PC-9 (cell line): ENCODE measurements at regions of chr19 and their contacts with region 1.

Region 1: GRCh38 chr19:54137086-54137921 is at the start of gene CNOT3:
- DNase-seq: peak; percentile 100
- H3K4me3 ChIP-seq: peak within 1 kb of the TSS; percentile 83
- H3K27ac ChIP-seq: peak within 1 kb of the TSS; percentile 82
- H3K4me1 ChIP-seq: peaks cover 26% of the 10 kb centered on the region; the same call in 1 of the 2 replicates
- H3K27me3 ChIP-seq: no peaks in the 10 kb centered on the region
- CTCF ChIP-seq: no peak
- total RNA-seq, gene CNOT3: 83.0 and 89.1 TPM in 2 replicates

Region 2: DNA sequence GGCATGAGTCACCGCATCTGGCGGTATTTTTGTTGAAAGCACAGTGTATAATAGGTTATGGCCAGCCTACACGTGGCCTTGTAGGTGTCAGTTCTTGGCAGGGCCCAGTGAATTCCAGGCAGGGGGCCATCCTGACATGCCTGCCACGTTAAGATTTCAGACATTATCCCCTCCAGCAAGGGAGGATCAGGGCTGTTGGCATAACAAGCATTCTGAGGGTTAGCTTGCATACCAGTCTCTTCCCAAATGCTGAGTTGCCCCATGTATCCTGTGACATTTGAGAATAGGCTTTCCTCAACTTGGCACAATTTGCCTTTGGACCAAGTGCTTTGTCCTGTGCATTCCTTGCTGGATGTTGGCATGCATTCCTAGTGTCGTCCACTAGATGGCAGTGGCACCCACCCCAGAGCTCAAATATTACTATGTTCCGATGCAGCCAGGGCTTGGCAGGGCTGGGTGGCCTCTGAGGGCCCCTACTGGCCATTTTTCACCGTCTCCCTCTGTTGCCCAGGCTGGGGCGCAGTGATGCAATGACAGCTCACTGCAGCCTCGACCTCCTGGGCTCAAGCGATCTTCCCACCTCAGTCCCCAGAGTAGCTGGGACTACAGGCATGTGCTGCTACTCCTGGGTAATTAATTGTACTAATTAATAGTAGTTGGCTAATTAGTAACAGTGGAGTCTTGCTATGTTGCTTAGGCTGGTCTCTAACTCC is 344.4 kb before region 1 on chr19:
- CTCF ChIA-PET with region 1: interaction called, 15 read pairs
- POLR2A ChIA-PET with region 1: no interaction called
- intact Hi-C with region 1: no loop called
- DNase-seq: peak; percentile 90 to 95
- H3K4me3 ChIP-seq: no peak overlapping the region
- H3K27ac ChIP-seq: no peak overlapping the region
- H3K4me1 ChIP-seq: no peaks in the 10 kb centered on the region
- H3K27me3 ChIP-seq: no peaks in the 10 kb centered on the region
- CTCF ChIP-seq: peak; percentile 99

Region 3: DNA sequence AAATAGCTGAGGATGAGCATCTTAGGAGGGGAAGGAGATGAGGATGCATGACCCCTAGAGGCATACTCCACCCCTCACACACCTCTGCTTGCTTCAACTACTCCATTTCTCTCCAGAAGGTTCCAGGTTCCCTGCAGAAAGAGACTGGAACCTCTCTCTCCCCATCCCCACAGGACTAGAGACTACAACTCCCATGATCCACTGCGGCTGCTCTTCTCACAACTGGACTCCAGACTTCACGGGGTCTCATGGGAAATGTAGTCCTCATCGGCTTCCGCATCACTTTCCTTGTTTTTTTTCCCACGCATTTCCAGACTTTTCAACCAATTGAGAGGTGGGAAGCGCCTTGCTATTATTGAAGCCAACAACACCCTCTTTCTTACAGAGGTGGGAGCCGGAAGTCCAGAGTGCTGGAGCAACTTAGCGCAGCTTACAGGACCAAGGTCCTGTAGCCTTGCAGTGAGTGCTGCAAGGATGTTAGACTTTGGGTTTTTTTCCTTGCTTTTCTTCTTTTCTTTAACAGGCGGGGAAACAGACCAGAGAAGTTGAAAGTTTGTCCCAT is 159.8 kb before region 1 on chr19:
- CTCF ChIA-PET with region 1: no interaction called
- POLR2A ChIA-PET with region 1: interaction called, 9 read pairs
- intact Hi-C with region 1: loop called (anchors 2 kb)
- DNase-seq: peak; percentile 72 to 79
- H3K4me3 ChIP-seq: no peak overlapping the region
- H3K27ac ChIP-seq: no peak overlapping the region
- H3K4me1 ChIP-seq: peaks cover 6% of the 10 kb centered on the region; the same call in 1 of the 2 replicates
- H3K27me3 ChIP-seq: no peaks in the 10 kb centered on the region
- CTCF ChIP-seq: no peak

Region 4: GRCh38 chr19:54029930-54030490 is 107.3 kb before region 1 on chr19:
- CTCF ChIA-PET with region 1: interaction called, 21 read pairs
- POLR2A ChIA-PET with region 1: no interaction called
- intact Hi-C with region 1: no loop called
- DNase-seq: peak; percentile 65 to 68
- H3K4me3 ChIP-seq: no peak overlapping the region
- H3K27ac ChIP-seq: no peak overlapping the region
- H3K4me1 ChIP-seq: peaks cover 15% of the 10 kb centered on the region
- H3K27me3 ChIP-seq: no peaks in the 10 kb centered on the region
- CTCF ChIP-seq: peak; percentile 87

Region 5: DNA sequence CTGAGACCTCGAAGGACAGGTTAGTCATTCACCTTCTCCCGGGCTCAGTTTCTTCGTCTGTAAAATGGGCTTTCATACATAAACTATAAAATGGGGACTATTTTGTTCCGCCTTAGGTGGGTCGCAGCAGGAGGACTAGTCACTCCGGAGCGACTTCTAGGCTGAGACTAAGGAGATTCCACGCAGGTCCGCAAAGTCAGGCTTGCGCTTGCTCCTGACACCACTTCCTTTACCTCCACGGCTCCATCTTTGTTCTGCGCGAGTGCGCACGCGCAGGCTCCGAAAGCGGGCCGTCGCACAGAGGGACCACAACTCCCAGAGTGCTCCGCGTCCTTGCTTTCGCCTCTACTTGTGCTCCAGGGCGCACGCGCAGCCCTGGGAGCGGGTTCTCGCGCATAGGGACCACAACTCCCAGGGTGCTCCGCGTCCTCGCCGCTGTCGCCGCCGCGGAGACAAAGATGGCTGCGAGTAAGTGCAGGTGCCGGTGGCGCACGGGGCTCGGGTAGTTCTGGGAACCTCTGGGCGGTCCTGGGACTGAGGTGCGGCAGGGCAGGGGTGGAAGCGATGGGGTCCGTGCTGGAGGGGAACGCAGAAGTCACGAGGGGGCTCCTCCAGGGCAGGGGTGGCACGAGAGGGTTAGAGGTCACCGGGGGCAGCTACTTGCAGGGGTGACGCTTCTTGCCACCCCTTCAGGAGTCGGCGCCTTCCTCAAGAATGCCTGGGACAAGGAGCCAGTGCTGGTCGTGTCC is 34.7 kb before region 1 on chr19 and contains the start of gene NDUFA3:
- CTCF ChIA-PET with region 1: no interaction called
- POLR2A ChIA-PET with region 1: interaction called, 4 read pairs
- intact Hi-C with region 1: loop called (anchors 1 kb)
- DNase-seq: peak; percentile 96 to 99
- H3K4me3 ChIP-seq: peak within 1 kb of the TSS; percentile 68
- H3K27ac ChIP-seq: no peak within 1 kb of the TSS
- H3K4me1 ChIP-seq: 0 out of 2 replicates have a peak, but pooled peaks cover 7% of the 10 kb centered on the region
- H3K27me3 ChIP-seq: no peaks in the 10 kb centered on the region
- CTCF ChIP-seq: no peak
- total RNA-seq, gene NDUFA3: 119 and 134 TPM in 2 replicates

Region 6: GRCh38 chr19:54159352-54160181 is 22.3 kb after region 1 on chr19 and contains the start of gene LENG1:
- CTCF ChIA-PET with region 1: no interaction called
- POLR2A ChIA-PET with region 1: interaction called, 28 read pairs
- intact Hi-C with region 1: loop called (anchors 1 kb)
- DNase-seq: peak; percentile 100
- H3K4me3 ChIP-seq: peak within 1 kb of the TSS; percentile 82
- H3K27ac ChIP-seq: peak within 1 kb of the TSS; percentile 57
- H3K4me1 ChIP-seq: peaks cover 33% of the 10 kb centered on the region
- H3K27me3 ChIP-seq: no peaks in the 10 kb centered on the region
- CTCF ChIP-seq: peak; percentile 53; the same call in 1 of the 2 replicates
- total RNA-seq, gene LENG1: 5.0 and 6.7 TPM in 2 replicates

Region 7: GRCh38 chr19:54248016-54248601 is 110.8 kb after region 1 on chr19:
- CTCF ChIA-PET with region 1: no interaction called
- POLR2A ChIA-PET with region 1: no interaction called
- intact Hi-C with region 1: no loop called
- DNase-seq: no peak
- H3K4me3 ChIP-seq: no peak overlapping the region
- H3K27ac ChIP-seq: no peak overlapping the region
- H3K4me1 ChIP-seq: no peaks in the 10 kb centered on the region
- H3K27me3 ChIP-seq: peaks cover 82% of the 10 kb centered on the region
- CTCF ChIP-seq: no peak

Region 8: DNA sequence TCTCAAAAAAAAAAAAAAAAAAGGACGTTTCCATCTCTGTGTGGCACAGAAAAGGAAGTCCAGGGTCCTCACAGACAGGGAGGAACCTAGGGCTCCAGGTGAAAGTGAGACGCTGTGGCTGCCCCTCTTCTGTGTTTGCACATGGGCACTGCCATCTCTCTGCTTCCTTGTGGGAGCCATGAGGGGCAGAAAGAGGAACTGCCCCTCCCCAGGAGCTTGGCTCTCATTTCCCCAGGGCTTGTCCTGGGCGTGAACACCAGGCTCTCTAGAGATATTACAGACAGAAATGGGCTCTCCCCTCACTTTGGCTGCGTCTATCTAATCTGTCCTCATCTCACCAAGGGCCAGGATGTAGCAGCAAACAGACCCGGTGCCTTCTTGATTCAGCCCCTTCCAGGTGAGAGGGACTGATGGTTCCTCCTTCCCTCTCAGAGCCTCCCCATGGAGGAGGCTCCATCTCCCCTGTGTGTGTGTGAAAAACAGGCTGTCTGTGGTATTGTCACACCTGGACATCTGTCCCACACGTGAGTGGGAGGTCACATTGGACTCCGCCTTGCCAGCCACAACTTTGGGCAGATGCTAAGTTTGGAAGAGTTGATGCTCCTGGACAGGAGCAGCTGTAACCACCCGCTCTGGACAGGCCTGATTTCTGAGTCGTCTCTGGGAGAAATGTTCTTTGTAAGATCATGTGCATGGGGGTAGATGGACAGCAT is 202.5 kb after region 1 on chr19:
- CTCF ChIA-PET with region 1: no interaction called
- POLR2A ChIA-PET with region 1: no interaction called
- intact Hi-C with region 1: no loop called
- DNase-seq: no peak
- H3K4me3 ChIP-seq: no peak overlapping the region
- H3K27ac ChIP-seq: no peak overlapping the region
- H3K4me1 ChIP-seq: no peaks in the 10 kb centered on the region
- H3K27me3 ChIP-seq: peaks cover 96% of the 10 kb centered on the region
- CTCF ChIP-seq: no peak

Region 9: GRCh38 chr19:54448774-54449700 is 311.7 kb after region 1 on chr19 and contains the start of gene LENG8:
- CTCF ChIA-PET with region 1: no interaction called
- POLR2A ChIA-PET with region 1: interaction called, 7 read pairs
- intact Hi-C with region 1: loop called (anchors 1 kb)
- DNase-seq: peak; percentile 94 to 98
- H3K4me3 ChIP-seq: peak within 1 kb of the TSS; percentile 96
- H3K27ac ChIP-seq: peak within 1 kb of the TSS; percentile 65
- H3K4me1 ChIP-seq: peaks cover 25% of the 10 kb centered on the region
- H3K27me3 ChIP-seq: no peaks in the 10 kb centered on the region
- CTCF ChIP-seq: no peak
- total RNA-seq, gene LENG8: 274 and 279 TPM in 2 replicates